Activated CD4-positive, alpha-beta T cell treated with anti-CD3 and anti-CD28 coated beads, Interleukin-2, amount 10 ng/mL, durations not matched to agents 7 days and 5 days (primary cell): ENCODE measurements at regions of chr10 and their contacts with region 1.

Region 1: GRCh38 chr10:100508691-100509150 is 10.9 kb downstream of the SEC31B start:
- DNase-seq: peak; percentile 82
- H3K4me3 Mint-ChIP-seq: peak overlapping the region; percentile 78
- H3K27ac Mint-ChIP-seq: peak overlapping the region; percentile 93
- H3K4me1 Mint-ChIP-seq: peaks cover 95% of the 10 kb centered on the region
- H3K27me3 Mint-ChIP-seq: no peaks in the 10 kb centered on the region

Region 2: GRCh38 chr10:100433253-100434240 is 75.2 kb before region 1 on chr10:
- CTCF ChIA-PET with region 1: interaction called, 69 read pairs
- POLR2A ChIA-PET with region 1: no interaction called
- DNase-seq: peak; percentile 98
- H3K4me3 Mint-ChIP-seq: no peak overlapping the region
- H3K27ac Mint-ChIP-seq: peak overlapping the region; percentile 9
- H3K4me1 Mint-ChIP-seq: peaks cover 14% of the 10 kb centered on the region
- H3K27me3 Mint-ChIP-seq: no peaks in the 10 kb centered on the region

Region 3: GRCh38 chr10:100481462-100482081 is 27.1 kb before region 1 on chr10:
- CTCF ChIA-PET with region 1: interaction called, 82 read pairs
- POLR2A ChIA-PET with region 1: interaction called, 10 read pairs
- DNase-seq: peak; percentile 92
- H3K4me3 Mint-ChIP-seq: peak overlapping the region; percentile 74
- H3K27ac Mint-ChIP-seq: peak overlapping the region; percentile 70
- H3K4me1 Mint-ChIP-seq: peaks cover 33% of the 10 kb centered on the region
- H3K27me3 Mint-ChIP-seq: peaks cover 13% of the 10 kb centered on the region

Region 4: DNA sequence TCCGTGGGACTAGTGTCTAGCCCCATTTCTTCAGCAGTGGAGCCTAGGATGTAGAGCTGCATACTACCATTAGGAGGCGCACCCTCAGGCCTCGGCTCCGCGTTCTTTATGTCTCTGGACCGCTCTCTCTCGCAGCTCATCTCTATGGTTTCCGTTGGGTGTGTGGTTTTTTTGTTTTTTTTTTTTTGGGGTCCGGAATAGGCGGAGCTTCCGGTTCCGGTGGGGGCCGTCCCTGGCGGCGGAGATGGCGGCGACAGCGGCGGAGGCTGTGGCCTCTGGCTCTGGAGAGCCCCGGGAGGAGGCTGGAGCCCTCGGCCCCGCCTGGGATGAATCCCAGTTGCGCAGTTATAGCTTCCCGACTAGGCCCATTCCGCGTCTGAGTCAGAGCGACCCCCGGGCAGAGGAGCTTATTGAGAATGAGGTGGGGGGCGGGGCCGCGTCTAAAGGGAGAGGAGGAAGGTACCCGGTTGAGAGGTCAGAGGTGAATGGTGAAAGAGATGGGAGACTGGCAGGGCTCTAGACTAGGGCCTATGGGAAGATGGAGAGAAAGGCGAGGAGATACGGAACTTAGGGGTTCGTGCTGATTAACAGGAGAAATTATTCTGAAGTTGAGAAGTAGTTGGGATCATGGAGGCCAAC is 27.1 kb after region 1 on chr10 and contains the start of gene HIF1AN:
- CTCF ChIA-PET with region 1: interaction called, 170 read pairs
- POLR2A ChIA-PET with region 1: interaction called, 4 read pairs
- DNase-seq: peak; percentile 93
- H3K4me3 Mint-ChIP-seq: no peak within 1 kb of the TSS
- H3K27ac Mint-ChIP-seq: peak within 1 kb of the TSS; percentile 61
- H3K4me1 Mint-ChIP-seq: peaks cover 12% of the 10 kb centered on the region
- H3K27me3 Mint-ChIP-seq: no peaks in the 10 kb centered on the region
- total RNA-seq, gene HIF1AN: 54.9 to 59.3 TPM

Region 5: GRCh38 chr10:100625816-100626215 is 117.1 kb after region 1 on chr10:
- CTCF ChIA-PET with region 1: no interaction called
- POLR2A ChIA-PET with region 1: no interaction called
- DNase-seq: no peak
- H3K4me3 Mint-ChIP-seq: no peak overlapping the region
- H3K27ac Mint-ChIP-seq: no peak overlapping the region
- H3K4me1 Mint-ChIP-seq: no peaks in the 10 kb centered on the region
- H3K27me3 Mint-ChIP-seq: peaks cover 45% of the 10 kb centered on the region